Naive thymus-derived CD4-positive, alpha-beta T cell (primary cell): ENCODE measurements at regions of chr17 and their contacts with region 1.

Region 1: DNA sequence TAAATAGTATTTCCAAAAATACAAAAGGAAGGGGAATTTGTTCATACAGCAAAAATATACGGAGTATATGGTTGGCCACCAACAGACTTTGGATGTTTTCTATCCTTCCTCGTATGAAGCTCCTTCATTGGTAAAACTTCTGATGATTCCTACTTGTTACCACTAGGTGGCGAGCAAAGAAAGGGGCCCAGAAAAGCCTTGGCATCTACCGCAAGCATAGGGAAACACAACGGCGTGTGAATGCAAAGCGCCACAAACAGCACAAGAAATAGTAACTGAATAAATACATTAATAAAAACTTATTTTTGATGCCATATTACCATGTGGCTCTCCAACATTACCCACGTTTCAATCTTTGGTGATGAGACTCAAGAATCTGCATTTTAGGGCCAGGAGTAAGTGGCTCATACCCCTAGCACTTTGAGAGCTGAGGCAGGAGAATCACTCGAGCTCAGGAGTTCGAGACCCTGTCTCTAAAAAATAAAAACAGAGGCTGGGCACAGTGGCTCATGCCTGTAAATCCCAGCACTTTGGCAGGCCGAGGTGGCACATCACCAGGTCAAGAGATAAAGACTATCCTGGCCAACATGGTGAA is 34.5 kb downstream of the YWHAE start:
- DNase-seq: peak in 8 of 9 donors; percentile 37 to 81 (median 74)
- ATAC-seq: peak; percentile 86
- H3K4me3 ChIP-seq: no peak overlapping the region
- H3K4me3 Mint-ChIP-seq: peak overlapping the region in 7 of 10 donors; percentile 2 to 48 (median 41)
- H3K27ac ChIP-seq: peak overlapping the region; percentile 48
- H3K27ac Mint-ChIP-seq: peak overlapping the region in 6 of 9 donors; percentile 35 to 86 (median 74)
- H3K4me1 ChIP-seq: peaks cover 25 to 27% of the 10 kb centered on the region in 2 donors
- H3K4me1 Mint-ChIP-seq: peaks cover 39 to 83% (median 64%) of the 10 kb centered on the region in 7 donors
- H3K27me3 ChIP-seq: no peaks in the 10 kb centered on the region
- H3K27me3 Mint-ChIP-seq: no peaks in the 10 kb centered on the region

Region 2: GRCh38 chr17:1351971-1352370 is 13.6 kb before region 1 on chr17:
- CTCF ChIA-PET with region 1: interaction called, 15 read pairs
- POLR2A ChIA-PET with region 1: interaction called, 4 read pairs
- intact Hi-C with region 1: no loop called
- DNase-seq: no peak
- ATAC-seq: no peak
- H3K4me3 ChIP-seq: no peak overlapping the region
- H3K4me3 Mint-ChIP-seq: no peak overlapping the region
- H3K27ac ChIP-seq: no peak overlapping the region
- H3K27ac Mint-ChIP-seq: no peak overlapping the region
- H3K4me1 ChIP-seq: no peaks in the 10 kb centered on the region
- H3K4me1 Mint-ChIP-seq: peaks cover 8 to 36% (median 22%) of the 10 kb centered on the region in 7 donors
- H3K27me3 ChIP-seq: no peaks in the 10 kb centered on the region
- H3K27me3 Mint-ChIP-seq: no peaks in the 10 kb centered on the region

Region 3: GRCh38 chr17:1399679-1400512 is 34.4 kb after region 1 on chr17 and contains the start of gene YWHAE:
- CTCF ChIA-PET with region 1: interaction called, 13 read pairs
- POLR2A ChIA-PET with region 1: interaction called, 9 read pairs
- intact Hi-C with region 1: loop called (anchors 1 to 2 kb)
- DNase-seq: peak; percentile 89 to 97 (median 94)
- ATAC-seq: peak; percentile 93
- H3K4me3 ChIP-seq: peak within 1 kb of the TSS; percentile 100
- H3K4me3 Mint-ChIP-seq: peak within 1 kb of the TSS; percentile 97 to 100 (median 99)
- H3K27ac ChIP-seq: peak within 1 kb of the TSS; percentile 98
- H3K27ac Mint-ChIP-seq: peak within 1 kb of the TSS; percentile 97 to 100 (median 99)
- H3K4me1 ChIP-seq: peaks cover 23 to 24% of the 10 kb centered on the region in 2 donors
- H3K4me1 Mint-ChIP-seq: peaks cover 18 to 45% (median 38%) of the 10 kb centered on the region in 7 donors
- H3K27me3 ChIP-seq: no peaks in the 10 kb centered on the region
- H3K27me3 Mint-ChIP-seq: peaks cover 0 to 6% (median 0%) of the 10 kb centered on the region in 5 donors
- total RNA-seq, gene YWHAE: 119 to 317 (median 127) TPM

Region 4: DNA sequence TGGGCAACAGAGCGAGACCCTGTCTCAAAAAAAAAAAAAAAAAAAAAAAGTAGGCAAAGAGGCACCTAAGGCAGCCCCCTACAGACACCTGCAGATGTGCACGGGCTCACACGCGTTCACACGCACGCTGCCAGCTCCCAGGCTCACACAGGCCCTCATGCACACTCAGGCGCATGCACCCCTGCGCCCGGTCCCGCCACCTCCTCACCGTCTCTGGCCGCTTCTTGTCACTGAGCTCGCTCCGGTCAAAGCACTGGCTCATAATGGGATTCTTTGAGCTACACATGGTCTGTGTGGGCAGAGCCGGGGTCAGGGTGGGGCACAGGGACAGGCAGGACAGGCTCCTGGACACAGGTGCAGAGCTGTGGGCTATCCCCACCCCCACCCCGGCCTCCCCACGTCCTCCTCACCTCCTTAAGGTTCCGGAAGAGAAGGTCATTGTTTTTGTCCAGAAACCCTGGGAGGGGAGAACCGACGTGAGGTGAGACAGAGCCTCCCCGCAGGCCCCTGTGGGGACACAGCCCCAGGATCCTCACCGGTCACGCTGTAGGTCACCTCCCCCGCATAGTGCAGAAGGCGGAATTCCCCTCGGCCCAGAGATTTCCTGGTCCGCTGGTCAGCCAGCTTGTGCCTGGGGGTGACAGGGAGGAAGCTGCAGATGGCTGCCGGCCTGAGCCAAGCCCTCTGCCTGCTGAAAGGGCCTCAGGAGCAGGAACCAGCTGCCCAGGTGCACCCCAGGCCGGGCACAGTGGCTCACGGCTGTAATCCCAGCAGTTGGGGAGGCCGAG is 109.1 kb after region 1 on chr17:
- CTCF ChIA-PET with region 1: interaction called, 5 read pairs
- POLR2A ChIA-PET with region 1: no interaction called
- intact Hi-C with region 1: loop called in 1 of 2 experiments (anchors 1 kb)
- DNase-seq: no peak
- ATAC-seq: no peak
- H3K4me3 ChIP-seq: no peak overlapping the region
- H3K4me3 Mint-ChIP-seq: no peak overlapping the region
- H3K27ac ChIP-seq: no peak overlapping the region
- H3K27ac Mint-ChIP-seq: no peak overlapping the region
- H3K4me1 ChIP-seq: peaks cover 0 to 7% of the 10 kb centered on the region in 2 donors
- H3K4me1 Mint-ChIP-seq: peaks cover 15 to 19% (median 18%) of the 10 kb centered on the region in 7 donors
- H3K27me3 ChIP-seq: no peaks in the 10 kb centered on the region
- H3K27me3 Mint-ChIP-seq: no peaks in the 10 kb centered on the region

Region 5: DNA sequence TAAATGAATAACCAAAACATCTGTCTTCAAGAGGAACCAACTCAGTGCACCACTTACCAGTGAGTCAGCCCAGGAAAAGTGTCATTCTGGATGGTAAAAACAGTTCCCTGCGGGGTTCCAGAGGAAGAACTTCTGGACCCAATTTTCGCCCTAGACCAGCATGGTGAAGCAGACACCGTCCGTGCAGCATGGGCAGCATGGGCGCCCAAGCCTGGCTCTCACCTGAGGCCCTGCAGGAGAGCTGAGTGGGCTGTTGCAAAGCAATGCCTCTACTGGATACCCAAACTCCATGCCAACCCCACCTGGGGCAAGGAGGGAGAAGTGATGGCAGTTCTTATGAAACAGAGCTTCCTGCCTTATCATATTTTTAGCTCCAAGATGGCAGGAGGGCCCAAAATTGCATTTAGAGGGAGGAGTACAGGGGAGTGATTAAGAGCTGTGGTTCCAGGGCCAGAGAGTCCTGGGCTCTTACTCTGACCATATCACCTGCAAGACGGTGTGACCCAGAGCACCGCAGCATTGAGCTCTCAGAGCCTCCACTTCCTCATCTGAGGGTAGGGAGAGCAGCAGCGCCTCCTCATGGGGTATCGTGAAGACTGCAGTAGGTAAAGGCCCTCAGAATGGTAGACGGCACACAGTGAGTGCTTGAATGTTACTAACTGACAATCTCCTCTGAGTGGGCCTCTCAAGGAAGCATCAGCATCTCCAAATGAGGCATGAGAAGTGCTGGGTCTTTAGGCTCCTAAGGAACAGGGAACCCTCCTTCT is 167.5 kb after region 1 on chr17:
- CTCF ChIA-PET with region 1: interaction called, 21 read pairs
- POLR2A ChIA-PET with region 1: interaction called, 7 read pairs
- intact Hi-C with region 1: loop called (anchors 1 to 5 kb)
- DNase-seq: peak in 8 of 9 donors; percentile 32 to 58 (median 50)
- ATAC-seq: peak; percentile 91
- H3K4me3 ChIP-seq: no peak overlapping the region
- H3K4me3 Mint-ChIP-seq: no peak overlapping the region
- H3K27ac ChIP-seq: no peak overlapping the region
- H3K27ac Mint-ChIP-seq: peak overlapping the region in 5 of 9 donors; percentile 41 to 79 (median 67)
- H3K4me1 ChIP-seq: no peaks in the 10 kb centered on the region
- H3K4me1 Mint-ChIP-seq: peaks cover 0 to 7% (median 0%) of the 10 kb centered on the region in 7 donors
- H3K27me3 ChIP-seq: no peaks in the 10 kb centered on the region
- H3K27me3 Mint-ChIP-seq: no peaks in the 10 kb centered on the region

Region 6: GRCh38 chr17:1628856-1629646 is 263.5 kb after region 1 on chr17:
- CTCF ChIA-PET with region 1: interaction called, 9 read pairs
- POLR2A ChIA-PET with region 1: interaction called, 9 read pairs
- intact Hi-C with region 1: loop called (anchors 1 to 2 kb)
- DNase-seq: peak; percentile 69 to 89 (median 84)
- ATAC-seq: peak; percentile 84
- H3K4me3 ChIP-seq: peak overlapping the region; percentile 83
- H3K4me3 Mint-ChIP-seq: peak overlapping the region; percentile 92 to 96 (median 94)
- H3K27ac ChIP-seq: peak overlapping the region; percentile 74
- H3K27ac Mint-ChIP-seq: peak overlapping the region; percentile 73 to 95 (median 87)
- H3K4me1 ChIP-seq: peaks cover 5 to 20% of the 10 kb centered on the region in 2 donors
- H3K4me1 Mint-ChIP-seq: peaks cover 17 to 26% (median 22%) of the 10 kb centered on the region in 7 donors
- H3K27me3 ChIP-seq: no peaks in the 10 kb centered on the region
- H3K27me3 Mint-ChIP-seq: peaks cover 0 to 59% (median 0%) of the 10 kb centered on the region in 5 donors

Region 7: GRCh38 chr17:1651559-1651844 is 286.0 kb after region 1 on chr17:
- CTCF ChIA-PET with region 1: no interaction called
- POLR2A ChIA-PET with region 1: no interaction called
- intact Hi-C with region 1: no loop called
- DNase-seq: no peak
- ATAC-seq: no peak
- H3K4me3 ChIP-seq: no peak overlapping the region
- H3K4me3 Mint-ChIP-seq: no peak overlapping the region
- H3K27ac ChIP-seq: no peak overlapping the region
- H3K27ac Mint-ChIP-seq: peak overlapping the region in 1 of 9 donors; percentile 50
- H3K4me1 ChIP-seq: peaks cover 6 to 11% of the 10 kb centered on the region in 2 donors
- H3K4me1 Mint-ChIP-seq: peaks cover 0 to 20% (median 5%) of the 10 kb centered on the region in 7 donors
- H3K27me3 ChIP-seq: no peaks in the 10 kb centered on the region
- H3K27me3 Mint-ChIP-seq: no peaks in the 10 kb centered on the region